CD8-positive, alpha-beta memory T cell (primary cell): ENCODE measurements at regions of chr11 and their contacts with region 1.

Region 1: GRCh38 chr11:122832721-122833470 is 5.4 kb upstream of the CRTAM start:
- DNase-seq: no peak
- H3K4me3 ChIP-seq: no peak overlapping the region
- H3K4me3 Mint-ChIP-seq: peak overlapping the region in 4 of 7 donors; percentile 6 to 37 (median 22)
- H3K27ac ChIP-seq: no peak overlapping the region
- H3K27ac Mint-ChIP-seq: peak overlapping the region; percentile 25 to 85 (median 65)
- H3K4me1 ChIP-seq: peaks cover 8% of the 10 kb centered on the region
- H3K4me1 Mint-ChIP-seq: peaks cover 45 to 53% (median 47%) of the 10 kb centered on the region in 3 donors
- H3K27me3 ChIP-seq: no peaks in the 10 kb centered on the region
- H3K27me3 Mint-ChIP-seq: no peaks in the 10 kb centered on the region

Region 2: DNA sequence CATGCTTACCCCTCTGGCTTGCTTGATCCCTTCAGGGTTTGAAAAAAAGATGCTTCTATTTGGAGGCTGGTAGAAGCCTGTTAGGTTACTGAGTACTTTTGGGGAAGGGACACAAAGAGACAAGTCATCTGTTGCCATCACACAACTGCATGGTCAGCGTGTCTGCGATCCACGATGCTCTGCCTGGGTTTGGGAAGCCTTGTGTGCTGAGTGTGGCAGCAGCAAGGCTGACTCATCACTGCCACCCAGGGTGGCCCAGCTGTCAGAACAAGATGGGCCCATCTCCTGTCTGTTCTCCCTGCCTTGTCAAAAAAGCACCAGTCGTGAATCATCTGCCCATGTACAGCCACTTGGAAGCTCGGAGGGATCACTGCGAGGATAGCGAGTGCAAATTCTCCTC is 151.2 kb before region 1 on chr11:
- CTCF ChIA-PET with region 1: no interaction called
- POLR2A ChIA-PET with region 1: no interaction called
- DNase-seq: no peak
- H3K4me3 ChIP-seq: no peak overlapping the region
- H3K4me3 Mint-ChIP-seq: no peak overlapping the region
- H3K27ac ChIP-seq: no peak overlapping the region
- H3K27ac Mint-ChIP-seq: peak overlapping the region in 2 of 8 donors; percentile 66 to 78
- H3K4me1 ChIP-seq: peaks cover 7% of the 10 kb centered on the region
- H3K4me1 Mint-ChIP-seq: peaks cover 31 to 62% (median 35%) of the 10 kb centered on the region in 3 donors
- H3K27me3 ChIP-seq: no peaks in the 10 kb centered on the region
- H3K27me3 Mint-ChIP-seq: no peaks in the 10 kb centered on the region

Region 3: GRCh38 chr11:122769126-122769780 is 63.6 kb before region 1 on chr11:
- CTCF ChIA-PET with region 1: no interaction called
- POLR2A ChIA-PET with region 1: no interaction called
- DNase-seq: no peak
- H3K4me3 ChIP-seq: no peak overlapping the region
- H3K4me3 Mint-ChIP-seq: no peak overlapping the region
- H3K27ac ChIP-seq: no peak overlapping the region
- H3K27ac Mint-ChIP-seq: peak overlapping the region in 1 of 8 donors; percentile 39
- H3K4me1 ChIP-seq: no peaks in the 10 kb centered on the region
- H3K4me1 Mint-ChIP-seq: peaks cover 5 to 18% (median 5%) of the 10 kb centered on the region in 3 donors
- H3K27me3 ChIP-seq: no peaks in the 10 kb centered on the region
- H3K27me3 Mint-ChIP-seq: no peaks in the 10 kb centered on the region

Region 4: DNA sequence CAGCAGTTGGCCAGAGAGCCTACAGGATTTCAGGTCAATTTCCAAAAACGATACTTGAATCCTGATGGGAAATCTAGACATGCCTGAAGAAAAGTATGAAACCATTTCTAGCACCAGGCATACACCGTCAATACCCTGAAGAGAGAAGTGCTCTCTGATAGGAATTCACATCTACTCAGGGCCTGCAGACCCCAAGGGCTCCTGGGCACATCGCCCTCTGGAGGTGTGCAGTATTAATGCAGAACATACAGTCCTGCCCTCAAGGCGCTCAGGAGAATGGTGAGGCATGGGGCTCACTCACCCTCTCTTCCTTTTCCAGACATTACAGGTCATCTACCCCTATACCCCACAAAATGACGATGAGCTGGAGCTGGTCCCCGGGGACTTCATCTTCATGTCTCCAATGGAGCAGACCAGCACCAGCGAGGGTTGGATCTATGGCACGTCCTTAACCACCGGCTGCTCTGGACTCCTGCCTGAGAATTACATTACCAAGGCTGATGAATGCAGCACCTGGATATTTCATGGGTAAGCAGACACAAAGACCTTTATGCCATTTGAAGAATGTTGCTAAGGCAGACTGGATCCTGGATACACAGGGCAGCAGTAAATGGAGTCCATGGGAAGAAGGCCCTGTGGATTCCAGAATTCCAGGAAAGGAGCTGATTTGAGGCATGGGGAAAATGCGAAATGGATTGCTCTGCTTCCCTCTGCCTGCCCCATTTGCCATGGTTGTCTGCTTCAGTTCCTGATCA is 43.9 kb before region 1 on chr11:
- CTCF ChIA-PET with region 1: no interaction called
- POLR2A ChIA-PET with region 1: no interaction called
- DNase-seq: no peak
- H3K4me3 ChIP-seq: no peak overlapping the region
- H3K4me3 Mint-ChIP-seq: peak overlapping the region in 1 of 7 donors; percentile 6
- H3K27ac ChIP-seq: no peak overlapping the region
- H3K27ac Mint-ChIP-seq: no peak overlapping the region
- H3K4me1 ChIP-seq: no peaks in the 10 kb centered on the region
- H3K4me1 Mint-ChIP-seq: no peaks in the 10 kb centered on the region
- H3K27me3 ChIP-seq: no peaks in the 10 kb centered on the region
- H3K27me3 Mint-ChIP-seq: peaks cover 0 to 1% of the 10 kb centered on the region in 2 donors

Region 5: GRCh38 chr11:122822241-122822640 is 10.7 kb before region 1 on chr11:
- CTCF ChIA-PET with region 1: interaction called, 10 read pairs
- POLR2A ChIA-PET with region 1: interaction called, 3 read pairs
- DNase-seq: no peak
- H3K4me3 ChIP-seq: no peak overlapping the region
- H3K4me3 Mint-ChIP-seq: no peak overlapping the region
- H3K27ac ChIP-seq: no peak overlapping the region
- H3K27ac Mint-ChIP-seq: peak overlapping the region in 2 of 8 donors; percentile 38 to 41
- H3K4me1 ChIP-seq: no peaks in the 10 kb centered on the region
- H3K4me1 Mint-ChIP-seq: peaks cover 9 to 15% (median 15%) of the 10 kb centered on the region in 3 donors
- H3K27me3 ChIP-seq: no peaks in the 10 kb centered on the region
- H3K27me3 Mint-ChIP-seq: peaks cover 2 to 10% of the 10 kb centered on the region in 2 donors

Region 6: DNA sequence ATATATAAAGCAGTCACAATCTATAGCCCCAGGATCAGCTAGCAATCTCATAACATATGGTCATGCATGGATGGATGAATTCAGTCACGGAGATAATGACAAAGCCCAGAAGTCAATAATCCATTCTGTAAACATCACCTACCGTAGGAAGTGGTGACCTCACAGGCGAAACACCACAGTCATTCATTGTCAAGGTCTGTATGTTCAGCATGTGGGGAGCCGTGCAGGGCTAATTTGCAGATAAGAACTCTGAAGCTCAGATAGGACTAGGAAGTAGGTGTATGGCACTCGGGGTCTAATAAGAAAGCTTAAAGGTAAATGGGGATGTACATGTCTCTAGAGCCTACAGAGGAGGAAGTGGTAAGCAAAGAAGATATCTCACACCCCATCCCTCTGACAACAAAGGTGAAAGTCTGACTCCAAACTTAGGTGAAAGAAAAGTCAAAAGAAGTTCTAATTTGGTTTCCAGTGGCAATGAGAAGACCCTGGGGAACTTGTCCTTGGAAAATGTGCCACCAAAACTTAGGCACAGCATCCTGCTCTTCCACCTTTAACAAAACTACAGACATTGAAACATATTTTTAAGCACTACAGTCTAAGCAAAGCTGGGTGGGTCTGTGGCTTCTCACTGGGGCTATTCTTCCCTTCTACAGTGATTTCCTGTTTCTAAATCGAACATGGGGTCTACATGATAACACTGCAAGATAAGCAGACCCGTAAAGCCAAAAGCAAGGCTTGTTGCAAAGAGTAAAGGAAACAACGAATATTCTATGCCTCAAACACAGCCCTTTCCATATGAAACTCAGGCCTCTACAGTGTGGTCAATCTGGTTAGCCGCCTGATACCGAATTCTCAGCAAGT is 10.6 kb after region 1 on chr11:
- CTCF ChIA-PET with region 1: interaction called, 28 read pairs
- POLR2A ChIA-PET with region 1: interaction called, 23 read pairs
- DNase-seq: peak; percentile 45 to 88 (median 76)
- H3K4me3 ChIP-seq: peak overlapping the region; percentile 34
- H3K4me3 Mint-ChIP-seq: peak overlapping the region; percentile 57 to 81 (median 73)
- H3K27ac ChIP-seq: peak overlapping the region; percentile 74
- H3K27ac Mint-ChIP-seq: peak overlapping the region; percentile 90 to 96 (median 94)
- H3K4me1 ChIP-seq: peaks cover 76% of the 10 kb centered on the region
- H3K4me1 Mint-ChIP-seq: peaks cover 81 to 85% (median 85%) of the 10 kb centered on the region in 3 donors
- H3K27me3 ChIP-seq: no peaks in the 10 kb centered on the region
- H3K27me3 Mint-ChIP-seq: no peaks in the 10 kb centered on the region

Region 7: GRCh38 chr11:122882857-122883645 is 50.2 kb after region 1 on chr11:
- CTCF ChIA-PET with region 1: no interaction called
- POLR2A ChIA-PET with region 1: no interaction called
- DNase-seq: peak; percentile 33 to 69 (median 56)
- H3K4me3 ChIP-seq: peak overlapping the region; percentile 83
- H3K4me3 Mint-ChIP-seq: peak overlapping the region; percentile 88 to 96 (median 90)
- H3K27ac ChIP-seq: peak overlapping the region; percentile 69
- H3K27ac Mint-ChIP-seq: peak overlapping the region; percentile 84 to 96 (median 94)
- H3K4me1 ChIP-seq: peaks cover 11% of the 10 kb centered on the region
- H3K4me1 Mint-ChIP-seq: peaks cover 37 to 60% (median 53%) of the 10 kb centered on the region in 3 donors
- H3K27me3 ChIP-seq: no peaks in the 10 kb centered on the region
- H3K27me3 Mint-ChIP-seq: no peaks in the 10 kb centered on the region